Activated CD4-positive, alpha-beta T cell treated with anti-CD3 and anti-CD28 coated beads for 36 hours (primary cell): ENCODE measurements at regions of chr11 and their contacts with region 1.

Region 1: GRCh38 chr11:15208378-15209222 is 93.9 kb downstream of the INSC start:
- DNase-seq: peak; percentile 87
- ATAC-seq: peak; percentile 97
- H3K4me3 Mint-ChIP-seq: no peak overlapping the region
- H3K27ac Mint-ChIP-seq: no peak overlapping the region
- H3K4me1 Mint-ChIP-seq: no peaks in the 10 kb centered on the region
- H3K27me3 Mint-ChIP-seq: no peaks in the 10 kb centered on the region

Region 2: DNA sequence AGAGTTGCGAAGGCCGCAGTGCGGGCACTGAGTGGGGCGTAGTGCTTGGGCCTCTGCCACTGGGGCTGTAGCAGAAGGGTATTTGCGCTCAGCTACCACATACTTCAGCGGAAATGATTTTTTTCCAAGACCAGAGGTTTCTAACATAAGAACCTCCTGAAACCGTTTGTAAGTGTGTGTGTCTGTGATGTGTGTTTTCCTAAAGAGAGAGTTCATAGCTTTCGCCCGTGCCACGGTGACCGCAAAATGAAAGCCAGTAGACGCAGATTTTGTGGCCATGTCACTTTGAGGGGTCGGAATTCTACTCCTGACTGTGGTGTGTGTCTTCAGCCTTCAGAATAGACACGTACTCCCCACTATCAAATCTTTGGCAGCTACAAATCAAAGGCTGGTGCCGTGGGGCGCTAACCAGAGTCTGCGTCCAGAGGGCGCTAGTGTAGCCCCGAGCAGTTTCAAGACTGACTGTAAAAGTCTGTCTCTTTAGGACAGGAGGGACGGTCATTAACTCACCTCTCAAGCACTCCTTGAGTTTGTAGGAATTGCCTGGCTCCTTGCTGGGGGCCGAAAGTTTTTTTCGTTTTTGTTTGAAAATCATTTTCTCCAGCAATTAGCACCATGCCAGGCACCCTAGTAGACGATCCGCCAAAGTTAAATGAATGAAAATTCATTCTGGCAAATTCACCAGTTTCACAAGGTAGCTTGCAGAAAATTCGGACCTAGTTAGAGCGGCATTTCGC is 233.9 kb before region 1 on chr11:
- CTCF ChIA-PET with region 1: no interaction called
- POLR2A ChIA-PET with region 1: no interaction called
- intact Hi-C with region 1: loop called (anchors 2 to 5 kb)
- DNase-seq: peak; percentile 85
- ATAC-seq: peak; percentile 72
- H3K4me3 Mint-ChIP-seq: peak overlapping the region; percentile 54
- H3K27ac Mint-ChIP-seq: no peak overlapping the region
- H3K4me1 Mint-ChIP-seq: peaks cover 27% of the 10 kb centered on the region
- H3K27me3 Mint-ChIP-seq: peaks cover 67% of the 10 kb centered on the region

Region 3: GRCh38 chr11:15038963-15039362 is 169.6 kb before region 1 on chr11:
- CTCF ChIA-PET with region 1: no interaction called
- POLR2A ChIA-PET with region 1: no interaction called
- intact Hi-C with region 1: loop called in 1 of 2 experiments (anchors 2 kb)
- DNase-seq: peak; percentile 34
- ATAC-seq: no peak
- H3K4me3 Mint-ChIP-seq: no peak overlapping the region
- H3K27ac Mint-ChIP-seq: no peak overlapping the region
- H3K4me1 Mint-ChIP-seq: no peaks in the 10 kb centered on the region
- H3K27me3 Mint-ChIP-seq: peaks cover 8% of the 10 kb centered on the region

Region 4: DNA sequence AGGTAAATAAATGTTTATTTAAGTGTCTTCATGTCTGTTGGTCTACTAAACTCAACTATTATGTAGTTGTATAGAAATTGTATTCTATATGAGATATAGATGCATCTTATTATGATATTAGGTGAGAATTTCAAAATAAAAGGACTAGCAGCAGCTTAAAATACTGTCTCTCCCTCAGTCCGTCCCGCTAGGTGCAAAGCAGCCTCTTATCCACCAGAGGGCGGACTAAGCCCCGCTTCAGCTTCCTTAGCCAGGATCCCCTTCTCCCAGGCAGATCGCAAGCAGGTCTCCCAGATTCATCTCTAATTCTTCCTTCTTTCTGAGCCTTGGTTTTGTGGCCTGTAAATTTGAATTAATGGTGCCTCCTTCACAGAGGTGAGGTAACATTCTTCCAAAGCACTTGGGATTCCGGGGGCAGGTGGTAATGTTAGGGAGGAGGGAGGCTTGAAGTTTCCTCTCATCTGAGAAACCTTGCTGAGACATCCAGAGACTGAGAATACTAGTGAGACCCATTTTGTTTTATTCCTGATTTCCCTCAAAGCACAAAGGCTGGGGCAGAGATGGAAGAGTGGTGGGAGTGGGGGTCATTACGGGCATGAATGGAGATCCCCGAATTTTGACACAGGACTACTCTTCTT is 107.4 kb before region 1 on chr11:
- CTCF ChIA-PET with region 1: interaction called, 48 read pairs
- POLR2A ChIA-PET with region 1: interaction called, 4 read pairs
- intact Hi-C with region 1: loop called (anchors 1 kb)
- DNase-seq: peak; percentile 74
- ATAC-seq: peak; percentile 79
- H3K4me3 Mint-ChIP-seq: no peak overlapping the region
- H3K27ac Mint-ChIP-seq: no peak overlapping the region
- H3K4me1 Mint-ChIP-seq: peaks cover 3% of the 10 kb centered on the region
- H3K27me3 Mint-ChIP-seq: peaks cover 17% of the 10 kb centered on the region

Region 5: GRCh38 chr11:15107730-15108515 is 100.7 kb before region 1 on chr11:
- CTCF ChIA-PET with region 1: interaction called, 20 read pairs
- POLR2A ChIA-PET with region 1: no interaction called
- intact Hi-C with region 1: no loop called
- DNase-seq: no peak
- ATAC-seq: no peak
- H3K4me3 Mint-ChIP-seq: no peak overlapping the region
- H3K27ac Mint-ChIP-seq: no peak overlapping the region
- H3K4me1 Mint-ChIP-seq: no peaks in the 10 kb centered on the region
- H3K27me3 Mint-ChIP-seq: no peaks in the 10 kb centered on the region

Region 6: GRCh38 chr11:15159085-15159484 is 49.5 kb before region 1 on chr11:
- CTCF ChIA-PET with region 1: interaction called, 4 read pairs
- POLR2A ChIA-PET with region 1: no interaction called
- intact Hi-C with region 1: loop called in 1 of 2 experiments (anchors 1 kb)
- DNase-seq: no peak
- ATAC-seq: no peak
- H3K4me3 Mint-ChIP-seq: no peak overlapping the region
- H3K27ac Mint-ChIP-seq: no peak overlapping the region
- H3K4me1 Mint-ChIP-seq: no peaks in the 10 kb centered on the region
- H3K27me3 Mint-ChIP-seq: peaks cover 4% of the 10 kb centered on the region

Region 7: GRCh38 chr11:15195454-15196200 is 13.0 kb before region 1 on chr11:
- CTCF ChIA-PET with region 1: interaction called, 10 read pairs
- POLR2A ChIA-PET with region 1: no interaction called
- intact Hi-C with region 1: no loop called
- DNase-seq: no peak
- ATAC-seq: no peak
- H3K4me3 Mint-ChIP-seq: no peak overlapping the region
- H3K27ac Mint-ChIP-seq: no peak overlapping the region
- H3K4me1 Mint-ChIP-seq: no peaks in the 10 kb centered on the region
- H3K27me3 Mint-ChIP-seq: no peaks in the 10 kb centered on the region

Region 8: GRCh38 chr11:15493921-15494620 is 285.5 kb after region 1 on chr11:
- CTCF ChIA-PET with region 1: no interaction called
- POLR2A ChIA-PET with region 1: no interaction called
- intact Hi-C with region 1: no loop called
- DNase-seq: no peak
- ATAC-seq: no peak
- H3K4me3 Mint-ChIP-seq: no peak overlapping the region
- H3K27ac Mint-ChIP-seq: no peak overlapping the region
- H3K4me1 Mint-ChIP-seq: no peaks in the 10 kb centered on the region
- H3K27me3 Mint-ChIP-seq: no peaks in the 10 kb centered on the region